MCF 10A (cell line): ENCODE measurements at regions of chr10 and their contacts with region 1.

Region 1: GRCh38 chr10:107409522-107409921 is 245.0 kb upstream of the SORCS1 start:
- DNase-seq: peak; percentile 63
- H3K4me3 Mint-ChIP-seq: no peak overlapping the region
- H3K27ac Mint-ChIP-seq: no peak overlapping the region
- H3K4me1 Mint-ChIP-seq: peaks cover 7% of the 10 kb centered on the region
- H3K27me3 Mint-ChIP-seq: no peaks in the 10 kb centered on the region
- CTCF ChIP-seq: peak; percentile 55

Region 2: GRCh38 chr10:106705681-106706100 is 703.8 kb before region 1 on chr10:
- CTCF ChIA-PET with region 1: interaction called, 33 read pairs
- POLR2A ChIA-PET with region 1: no interaction called
- intact Hi-C with region 1: loop called (anchors 5 kb)
- DNase-seq: peak; percentile 75
- H3K4me3 Mint-ChIP-seq: no peak overlapping the region
- H3K27ac Mint-ChIP-seq: peak overlapping the region; percentile 52
- H3K4me1 Mint-ChIP-seq: peaks cover 6% of the 10 kb centered on the region
- H3K27me3 Mint-ChIP-seq: no peaks in the 10 kb centered on the region
- CTCF ChIP-seq: peak; percentile 79

Region 3: DNA sequence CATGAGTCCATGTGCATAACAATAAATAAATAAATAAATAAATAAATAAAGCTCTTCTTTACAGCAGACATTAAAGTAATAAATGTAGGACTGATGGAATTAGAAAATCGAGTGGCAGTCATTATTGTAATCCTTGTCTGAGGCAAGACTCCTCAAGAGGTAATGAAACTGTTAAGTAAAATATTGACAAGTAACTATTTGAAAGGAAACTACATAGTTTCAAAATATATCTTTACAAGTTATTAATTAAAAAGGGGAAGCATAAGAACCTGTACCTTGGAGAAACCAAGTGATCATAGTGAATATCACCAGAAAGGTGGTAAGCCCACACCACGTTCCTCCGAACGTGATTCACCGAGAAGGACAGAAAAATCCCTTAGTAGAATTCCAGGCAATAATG is 40.5 kb after region 1 on chr10:
- CTCF ChIA-PET with region 1: interaction called, 10 read pairs
- POLR2A ChIA-PET with region 1: no interaction called
- intact Hi-C with region 1: no loop called
- DNase-seq: no peak
- H3K4me3 Mint-ChIP-seq: no peak overlapping the region
- H3K27ac Mint-ChIP-seq: no peak overlapping the region
- H3K4me1 Mint-ChIP-seq: no peaks in the 10 kb centered on the region
- H3K27me3 Mint-ChIP-seq: no peaks in the 10 kb centered on the region
- CTCF ChIP-seq: no peak

Region 4: GRCh38 chr10:107583974-107584373 is 174.5 kb after region 1 on chr10:
- CTCF ChIA-PET with region 1: no interaction called
- POLR2A ChIA-PET with region 1: no interaction called
- intact Hi-C with region 1: no loop called
- DNase-seq: no peak
- H3K4me3 Mint-ChIP-seq: no peak overlapping the region
- H3K27ac Mint-ChIP-seq: peak overlapping the region; percentile 37
- H3K4me1 Mint-ChIP-seq: peaks cover 10% of the 10 kb centered on the region
- H3K27me3 Mint-ChIP-seq: no peaks in the 10 kb centered on the region
- CTCF ChIP-seq: no peak

Region 5: DNA sequence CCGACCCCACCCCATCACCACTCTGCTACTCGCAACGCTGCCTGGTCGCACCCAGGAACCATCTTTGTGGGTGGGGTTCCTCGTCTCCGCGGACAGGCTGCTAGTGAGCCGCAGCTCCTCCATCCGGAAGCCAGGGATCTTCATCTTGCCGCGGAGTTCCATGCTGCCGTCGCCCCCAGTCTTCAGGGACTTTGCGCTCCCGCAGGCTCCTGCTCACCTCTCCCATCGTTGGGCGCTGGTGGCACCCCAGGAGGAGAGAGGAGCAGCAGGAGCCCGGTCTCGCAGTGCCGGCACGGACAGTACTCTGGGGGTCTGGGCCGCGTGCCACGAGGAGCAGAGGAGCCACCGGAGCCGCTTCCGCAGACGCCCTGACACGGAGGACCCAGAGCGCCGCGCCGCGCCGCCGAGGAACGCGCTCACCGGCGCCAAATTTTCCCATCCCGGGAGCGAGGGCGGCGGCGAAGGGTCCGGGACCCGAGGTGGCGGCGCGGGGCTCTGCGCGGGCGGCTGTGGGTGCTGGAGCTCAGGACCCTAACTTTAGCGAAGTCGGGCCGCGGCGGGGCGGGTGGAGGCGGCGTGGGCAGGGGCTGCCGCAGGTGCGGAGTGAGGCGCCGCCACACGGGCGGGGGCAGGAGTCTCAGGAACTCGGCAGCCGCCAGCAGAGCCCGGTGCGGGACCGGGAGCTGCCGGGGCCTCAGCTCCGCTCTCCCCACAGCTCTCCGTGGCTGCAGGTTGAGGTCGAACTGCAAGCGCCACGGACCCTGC is 505.1 kb after region 1 on chr10:
- CTCF ChIA-PET with region 1: interaction called, 4 read pairs
- POLR2A ChIA-PET with region 1: no interaction called
- intact Hi-C with region 1: loop called (anchors 2 kb)
- DNase-seq: peak; percentile 9
- H3K4me3 Mint-ChIP-seq: peak overlapping the region; percentile 68
- H3K27ac Mint-ChIP-seq: no peak overlapping the region
- H3K4me1 Mint-ChIP-seq: peaks cover 9% of the 10 kb centered on the region
- H3K27me3 Mint-ChIP-seq: no peaks in the 10 kb centered on the region
- CTCF ChIP-seq: no peak

Region 6: DNA sequence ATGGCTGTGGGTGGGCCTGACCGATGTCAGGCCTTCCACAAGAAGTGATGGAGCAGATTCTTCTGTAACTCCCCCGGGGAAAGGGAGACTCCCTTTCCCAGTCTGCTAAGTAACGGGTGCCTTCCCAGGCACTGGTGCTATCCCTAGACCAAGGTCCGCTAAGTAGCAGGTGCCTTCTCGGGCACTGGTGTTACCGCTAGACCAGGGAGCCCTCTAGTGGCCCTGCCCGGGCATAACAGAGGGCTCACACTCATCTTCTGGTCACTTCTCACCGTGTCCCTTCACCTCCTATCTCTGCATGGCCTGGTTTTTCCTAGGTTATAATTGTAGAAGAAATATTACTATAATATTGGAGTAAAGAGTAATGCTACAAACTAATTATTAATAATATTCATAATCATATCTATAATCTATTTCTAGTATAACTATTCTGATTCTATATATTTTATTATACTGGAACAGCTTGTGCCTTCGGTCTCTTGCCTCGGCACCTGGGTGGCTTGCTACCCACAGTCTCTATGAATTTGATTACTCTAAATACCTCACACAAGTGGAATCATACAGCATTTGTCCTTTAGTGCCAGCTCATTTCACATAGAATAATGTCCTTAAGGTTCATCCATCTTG is 1135.1 kb after region 1 on chr10:
- CTCF ChIA-PET with region 1: interaction called, 10 read pairs
- POLR2A ChIA-PET with region 1: no interaction called
- intact Hi-C with region 1: loop called (anchors 1 kb)
- DNase-seq: peak; percentile 64
- H3K4me3 Mint-ChIP-seq: no peak overlapping the region
- H3K27ac Mint-ChIP-seq: no peak overlapping the region
- H3K4me1 Mint-ChIP-seq: no peaks in the 10 kb centered on the region
- H3K27me3 Mint-ChIP-seq: no peaks in the 10 kb centered on the region
- CTCF ChIP-seq: peak; percentile 96